Activated T-helper 2 cell treated with anti-CD3 and anti-CD28 coated beads, Interferon-gamma antibody, Interleukin-2, Interleukin-4, amounts not matched to agents 10 μg/mL and 5 μg/mL and 100 μg/mL, durations not matched to agents 14 hours and 24 hours and 36 hours (primary cell): ENCODE measurements at regions of chr16 and their contacts with region 1.

Region 1: GRCh38 chr16:84277237-84277823 is 17.3 kb upstream of the WFDC1 start:
- DNase-seq: peak; percentile 57
- H3K4me3 Mint-ChIP-seq: no peak overlapping the region
- H3K27ac Mint-ChIP-seq: no peak overlapping the region
- H3K4me1 Mint-ChIP-seq: no peaks in the 10 kb centered on the region
- H3K27me3 Mint-ChIP-seq: peaks cover 3% of the 10 kb centered on the region

Region 2: GRCh38 chr16:84484579-84485254 is 207.4 kb after region 1 on chr16:
- intact Hi-C with region 1: loop called (anchors 1 kb)
- DNase-seq: no peak
- H3K4me3 Mint-ChIP-seq: no peak overlapping the region
- H3K27ac Mint-ChIP-seq: no peak overlapping the region
- H3K4me1 Mint-ChIP-seq: no peaks in the 10 kb centered on the region
- H3K27me3 Mint-ChIP-seq: no peaks in the 10 kb centered on the region

Region 3: DNA sequence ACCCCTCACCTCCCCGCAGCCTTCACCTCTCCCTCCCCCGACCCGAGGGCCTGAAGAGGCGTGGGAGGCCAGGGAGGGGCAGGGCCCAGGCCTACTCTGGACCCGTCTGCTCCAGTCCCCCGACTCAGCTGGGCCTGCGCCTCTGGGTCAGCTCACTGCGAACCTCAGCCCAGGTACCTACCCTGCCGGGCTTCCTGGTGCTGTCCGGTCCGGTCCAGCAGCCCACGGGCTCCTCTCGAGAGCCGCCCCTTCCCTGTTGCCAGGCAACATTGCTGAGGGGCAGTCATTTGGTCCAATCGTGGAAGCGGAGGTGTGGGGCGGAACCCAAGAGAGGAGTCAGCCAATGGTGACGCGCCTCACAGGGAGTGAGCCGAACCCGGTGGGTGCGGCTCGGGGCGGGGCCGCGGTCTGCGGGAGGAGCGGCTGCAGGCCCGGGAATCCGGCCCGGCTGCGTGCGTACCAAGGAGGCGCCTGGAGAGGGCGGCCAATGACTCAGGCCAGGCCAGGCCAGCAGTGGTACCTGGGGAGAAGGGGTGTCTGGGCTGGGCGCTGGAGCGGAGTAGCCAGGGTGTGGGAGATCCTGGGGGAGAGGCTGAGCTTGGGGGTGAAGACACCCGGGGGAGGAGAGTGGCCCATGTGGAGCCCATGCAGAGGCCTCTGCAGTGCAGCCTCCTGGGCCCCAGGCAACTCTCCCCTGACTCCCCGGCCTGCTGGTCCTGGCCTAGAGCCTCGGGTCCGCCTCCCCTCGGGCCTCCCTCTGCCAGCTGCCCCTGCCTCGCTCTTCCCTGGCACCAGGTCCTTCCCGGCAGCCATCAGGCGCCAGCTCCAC is 227.3 kb after region 1 on chr16 and contains the start of gene MEAK7:
- intact Hi-C with region 1: loop called (anchors 1 kb)
- DNase-seq: peak; percentile 96
- H3K4me3 Mint-ChIP-seq: peak within 1 kb of the TSS; percentile 88
- H3K27ac Mint-ChIP-seq: peak within 1 kb of the TSS; percentile 89
- H3K4me1 Mint-ChIP-seq: peaks cover 44% of the 10 kb centered on the region
- H3K27me3 Mint-ChIP-seq: no peaks in the 10 kb centered on the region
- total RNA-seq, gene MEAK7: 15.4 and 19.4 TPM in 2 replicates